Prostate gland (tissue), 2 donors: ENCODE measurements at regions of chr2 and their contacts with region 1.

Region 1: DNA sequence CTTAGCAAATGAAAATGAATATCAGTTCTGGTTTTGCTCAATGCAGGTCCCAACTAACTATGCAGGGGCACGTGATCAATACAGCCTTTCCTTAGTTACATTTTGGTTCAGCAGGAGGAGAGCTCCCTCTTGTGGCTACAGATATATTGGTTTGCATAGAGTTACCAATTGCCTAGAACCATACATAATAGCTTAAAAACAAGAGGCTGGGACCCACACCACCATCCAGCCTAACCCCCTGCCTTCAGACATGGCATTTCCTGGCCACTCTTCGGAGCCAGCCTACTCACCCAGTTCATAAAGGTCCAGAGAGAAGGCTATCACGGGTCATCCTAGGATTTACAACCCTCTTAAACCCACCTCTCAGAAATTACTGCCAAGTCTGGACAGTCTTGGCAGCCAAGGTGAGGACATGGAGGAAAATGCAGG is 10.5 kb downstream of the CCDC93 start:
- DNase-seq: peak; percentile 74
- H3K4me3 ChIP-seq: no peak overlapping the region
- H3K27ac ChIP-seq: no peak overlapping the region
- H3K4me1 ChIP-seq: no peaks in the 10 kb centered on the region
- H3K27me3 ChIP-seq: no peaks in the 10 kb centered on the region
- CTCF ChIP-seq: peak; percentile 56 to 85 (median 78)
- POLR2A ChIP-seq: no peak

Region 2: DNA sequence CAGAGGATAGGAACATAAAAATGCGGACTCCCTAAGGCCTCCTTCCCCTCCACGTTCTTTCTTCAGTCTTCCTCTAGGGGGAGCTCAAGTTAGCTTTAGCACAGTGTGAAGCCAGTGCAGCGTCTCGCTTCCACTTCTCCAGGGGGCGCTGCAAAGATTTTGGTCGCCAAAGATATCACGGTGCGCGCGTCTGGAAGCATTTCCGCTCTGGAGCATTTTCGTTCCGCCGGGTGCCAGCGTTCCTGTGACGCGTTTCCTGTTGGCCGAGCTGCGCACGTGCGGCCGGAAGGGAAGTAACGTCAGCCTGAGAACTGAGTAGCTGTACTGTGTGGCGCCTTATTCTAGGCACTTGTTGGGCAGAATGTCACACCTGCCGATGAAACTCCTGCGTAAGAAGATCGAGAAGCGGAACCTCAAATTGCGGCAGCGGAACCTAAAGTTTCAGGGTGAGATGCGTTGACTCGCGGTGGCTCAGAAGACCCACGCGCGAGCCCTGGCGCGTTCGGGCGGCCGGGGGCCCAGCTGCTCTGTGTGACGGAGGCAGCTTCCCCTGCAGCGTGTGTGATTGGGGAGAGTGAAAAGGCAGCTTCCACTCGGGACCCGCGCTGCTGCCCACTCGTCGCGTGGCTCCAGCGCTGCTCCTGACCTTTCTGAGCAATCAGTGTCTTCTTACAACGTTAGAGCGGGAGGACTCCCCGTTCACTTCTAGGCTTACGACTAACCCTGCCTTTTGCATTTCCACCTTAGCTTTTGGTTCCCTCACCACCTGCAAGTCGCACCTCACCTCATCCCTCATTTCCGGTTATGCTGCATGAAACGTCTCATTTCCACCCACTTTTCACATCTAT is 188.8 kb before region 1 on chr2 and contains the start of gene DDX18:
- intact Hi-C with region 1: loop called (anchors 5 kb)
- DNase-seq: peak; percentile 97
- H3K4me3 ChIP-seq: peak within 1 kb of the TSS; percentile 74 to 89
- H3K27ac ChIP-seq: peak within 1 kb of the TSS; percentile 69 to 70
- H3K4me1 ChIP-seq: peaks cover 8% of the 10 kb centered on the region
- H3K27me3 ChIP-seq: no peaks in the 10 kb centered on the region
- CTCF ChIP-seq: peak; percentile 85 to 100 (median 99)
- POLR2A ChIP-seq: peak; percentile 38
- total RNA-seq, gene DDX18: 33.2 to 48.2 TPM

Region 3: DNA sequence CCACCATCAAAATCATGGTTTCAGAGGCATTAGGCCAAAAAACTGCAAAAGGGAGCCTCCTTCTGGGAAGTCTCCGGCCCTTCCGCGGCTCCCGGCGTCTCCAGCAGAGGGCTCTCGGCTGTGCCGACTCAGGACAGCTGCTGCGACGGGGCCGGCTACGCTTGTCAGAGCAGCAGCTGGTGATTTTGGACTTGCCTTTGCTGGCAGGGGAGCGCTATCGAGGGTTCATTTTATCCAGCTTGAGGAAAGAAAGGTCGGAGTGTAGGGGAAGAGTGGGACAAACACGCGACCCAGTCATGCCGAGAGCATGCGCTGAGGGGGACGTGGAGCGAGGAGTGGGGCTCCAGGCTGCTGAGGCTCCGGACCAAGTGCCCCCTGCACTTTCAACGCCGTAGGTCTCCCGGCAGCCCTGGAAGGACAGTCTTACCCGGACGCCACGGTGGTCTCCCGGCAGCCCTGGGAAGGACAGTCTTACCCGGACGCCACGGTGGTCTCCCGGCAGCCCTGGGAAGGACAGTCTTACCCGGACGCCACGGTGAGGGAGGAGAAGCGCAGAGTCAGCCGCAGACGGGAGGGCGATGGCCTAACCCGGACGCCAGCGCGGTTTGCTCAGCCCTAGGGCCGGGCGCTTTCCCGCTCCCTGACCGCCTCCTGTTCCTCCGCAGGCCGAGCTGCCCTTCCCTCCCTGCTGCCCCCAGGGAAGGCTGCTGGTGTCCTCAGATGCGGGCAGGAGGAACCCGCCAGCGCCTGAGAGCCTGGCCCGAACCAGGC is 167.2 kb before region 1 on chr2:
- intact Hi-C with region 1: loop called (anchors 2 kb)
- DNase-seq: peak; percentile 71
- H3K4me3 ChIP-seq: peak overlapping the region; percentile 20 to 29
- H3K27ac ChIP-seq: no peak overlapping the region
- H3K4me1 ChIP-seq: no peaks in the 10 kb centered on the region
- H3K27me3 ChIP-seq: no peaks in the 10 kb centered on the region
- CTCF ChIP-seq: peak; percentile 15 to 71 (median 64)
- POLR2A ChIP-seq: no peak